CD4-positive, alpha-beta memory T cell (primary cell): ENCODE measurements at regions of chr11 and their contacts with region 1.

Region 1: GRCh38 chr11:18115360-18116127 is 9.7 kb upstream of the SAAL1 start:
- DNase-seq: peak; percentile 60 to 67 (median 63)
- H3K4me3 ChIP-seq: no peak overlapping the region
- H3K4me3 Mint-ChIP-seq: peak overlapping the region in 1 of 8 donors; percentile 7
- H3K27ac ChIP-seq: no peak overlapping the region
- H3K27ac Mint-ChIP-seq: peak overlapping the region in 2 of 7 donors; percentile 10 to 70
- H3K4me1 ChIP-seq: no peaks in the 10 kb centered on the region
- H3K4me1 Mint-ChIP-seq: peaks cover 4 to 7% (median 5%) of the 10 kb centered on the region in 4 donors
- H3K27me3 ChIP-seq: no peaks in the 10 kb centered on the region
- H3K27me3 Mint-ChIP-seq: peaks cover 10 to 23% of the 10 kb centered on the region in 2 donors

Region 2: DNA sequence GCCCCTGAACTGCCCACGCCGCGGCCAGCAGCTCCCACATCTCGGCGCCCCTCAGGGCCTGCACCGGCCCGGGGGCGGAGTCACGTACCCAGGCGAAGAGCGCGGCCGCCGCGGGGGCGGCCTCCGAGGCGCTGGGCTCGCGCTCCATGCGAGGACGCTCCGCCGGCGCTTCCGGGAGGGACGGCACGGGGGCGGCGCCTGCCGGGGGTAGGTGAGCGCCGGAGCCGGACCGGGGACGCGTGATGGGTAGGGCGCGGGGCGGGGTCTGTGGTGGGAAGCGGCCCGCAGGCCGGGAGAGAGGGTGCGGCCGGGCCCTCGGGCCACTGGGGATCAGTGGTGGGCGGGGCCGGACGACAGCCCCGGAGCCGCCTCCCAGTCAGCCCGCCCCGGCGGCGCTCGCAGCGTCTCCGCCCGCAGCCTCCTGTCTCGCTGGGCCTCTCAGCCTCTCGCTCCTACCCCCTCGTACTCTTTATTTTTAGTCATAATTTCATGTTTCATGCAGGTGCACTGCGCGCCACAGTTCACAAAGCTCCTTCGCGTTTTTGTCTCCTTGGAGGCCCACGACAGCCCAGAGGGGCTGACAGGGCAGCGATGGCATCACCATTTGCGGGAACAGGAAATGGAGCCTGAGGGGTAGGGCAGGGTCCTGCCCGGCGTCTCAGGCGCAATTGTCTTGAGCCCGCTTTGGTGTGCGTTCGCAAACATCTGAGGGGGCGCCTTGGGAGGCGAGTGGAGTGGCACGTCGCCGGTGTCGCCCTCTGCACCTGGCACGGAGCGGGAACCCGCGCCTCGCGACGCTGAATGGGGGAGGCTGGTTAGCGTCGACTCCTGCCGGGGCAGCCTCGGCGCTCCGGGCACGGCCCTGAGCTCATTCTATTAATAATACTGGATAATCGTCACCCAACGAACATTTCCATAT is 102.4 kb before region 1 on chr11 and contains the start of gene SERGEF:
- CTCF ChIA-PET with region 1: interaction called, 12 read pairs
- POLR2A ChIA-PET with region 1: no interaction called
- intact Hi-C with region 1: no loop called
- DNase-seq: peak; percentile 91 to 92 (median 91)
- H3K4me3 ChIP-seq: peak within 1 kb of the TSS; percentile 72 to 94
- H3K4me3 Mint-ChIP-seq: peak within 1 kb of the TSS; percentile 93 to 99 (median 96)
- H3K27ac ChIP-seq: peak within 1 kb of the TSS; percentile 73
- H3K27ac Mint-ChIP-seq: peak within 1 kb of the TSS; percentile 94 to 100 (median 98)
- H3K4me1 ChIP-seq: peaks cover 19% of the 10 kb centered on the region
- H3K4me1 Mint-ChIP-seq: peaks cover 18 to 41% (median 26%) of the 10 kb centered on the region in 4 donors
- H3K27me3 ChIP-seq: no peaks in the 10 kb centered on the region
- H3K27me3 Mint-ChIP-seq: no peaks in the 10 kb centered on the region
- total RNA-seq, gene SERGEF: 46.2 to 54.1 TPM

Region 3: GRCh38 chr11:18093959-18094358 is 21.6 kb before region 1 on chr11:
- CTCF ChIA-PET with region 1: interaction called, 21 read pairs
- POLR2A ChIA-PET with region 1: no interaction called
- intact Hi-C with region 1: no loop called
- DNase-seq: no peak
- H3K4me3 ChIP-seq: no peak overlapping the region
- H3K4me3 Mint-ChIP-seq: no peak overlapping the region
- H3K27ac ChIP-seq: no peak overlapping the region
- H3K27ac Mint-ChIP-seq: no peak overlapping the region
- H3K4me1 ChIP-seq: no peaks in the 10 kb centered on the region
- H3K4me1 Mint-ChIP-seq: peaks cover 0 to 5% (median 2%) of the 10 kb centered on the region in 4 donors
- H3K27me3 ChIP-seq: no peaks in the 10 kb centered on the region
- H3K27me3 Mint-ChIP-seq: no peaks in the 10 kb centered on the region

Region 4: GRCh38 chr11:18768472-18768901 is 652.9 kb after region 1 on chr11:
- CTCF ChIA-PET with region 1: interaction called, 49 read pairs
- POLR2A ChIA-PET with region 1: no interaction called
- intact Hi-C with region 1: no loop called
- DNase-seq: no peak
- H3K4me3 ChIP-seq: no peak overlapping the region
- H3K4me3 Mint-ChIP-seq: no peak overlapping the region
- H3K27ac ChIP-seq: no peak overlapping the region
- H3K27ac Mint-ChIP-seq: no peak overlapping the region
- H3K4me1 ChIP-seq: peaks cover 5% of the 10 kb centered on the region
- H3K4me1 Mint-ChIP-seq: peaks cover 4 to 5% (median 4%) of the 10 kb centered on the region in 4 donors
- H3K27me3 ChIP-seq: no peaks in the 10 kb centered on the region
- H3K27me3 Mint-ChIP-seq: peaks cover 8% of the 10 kb centered on the region in 2 donors

Region 5: GRCh38 chr11:18802381-18803257 is 687.1 kb after region 1 on chr11:
- CTCF ChIA-PET with region 1: interaction called, 4 read pairs
- POLR2A ChIA-PET with region 1: no interaction called
- intact Hi-C with region 1: loop called (anchors 1 kb)
- DNase-seq: peak in 4 of 5 donors; percentile 20 to 43 (median 35)
- H3K4me3 ChIP-seq: no peak overlapping the region
- H3K4me3 Mint-ChIP-seq: peak overlapping the region in 1 of 8 donors; percentile 54
- H3K27ac ChIP-seq: no peak overlapping the region
- H3K27ac Mint-ChIP-seq: no peak overlapping the region
- H3K4me1 ChIP-seq: no peaks in the 10 kb centered on the region
- H3K4me1 Mint-ChIP-seq: peaks cover 0 to 6% (median 3%) of the 10 kb centered on the region in 4 donors
- H3K27me3 ChIP-seq: peaks cover 8% of the 10 kb centered on the region
- H3K27me3 Mint-ChIP-seq: peaks cover 6 to 10% of the 10 kb centered on the region in 2 donors